Activated CD4-positive, alpha-beta T cell treated with anti-CD3 and anti-CD28 coated beads, Interleukin-2, amount 10 ng/mL, durations not matched to agents 7 days and 5 days (primary cell): ENCODE measurements at regions of chr2 and their contacts with region 1.

Region 1: DNA sequence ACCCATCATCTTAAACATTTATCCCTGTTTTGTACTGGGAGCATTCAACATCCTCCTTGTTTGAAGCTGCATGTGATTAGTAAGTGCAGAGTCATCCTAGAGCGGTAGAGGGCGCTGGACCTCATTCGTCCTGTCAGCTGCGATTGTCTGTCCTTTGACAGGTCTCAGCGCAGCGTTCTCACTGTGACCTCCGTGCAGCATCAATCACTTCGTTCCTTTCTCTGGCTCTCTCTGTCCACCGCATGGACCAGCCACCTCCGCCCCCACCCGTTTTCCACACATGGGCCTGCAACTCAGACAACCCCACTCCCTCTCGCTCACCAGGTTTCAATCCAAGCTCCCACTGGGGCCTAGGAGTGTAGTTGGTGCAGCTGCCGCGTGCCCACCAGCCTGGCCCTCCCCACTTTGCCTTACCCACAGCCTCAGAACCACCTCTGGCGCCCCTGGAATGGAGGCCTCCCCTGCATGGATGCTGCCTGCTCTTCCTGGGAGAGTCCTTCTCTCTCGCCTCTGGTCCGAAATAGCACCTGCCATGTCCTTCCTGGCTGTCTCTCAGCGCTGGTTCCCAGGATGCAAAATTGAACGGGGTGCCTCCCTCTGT is 90.5 kb downstream of the NDUFA10 start:
- DNase-seq: peak; percentile 78
- H3K4me3 Mint-ChIP-seq: no peak overlapping the region
- H3K27ac Mint-ChIP-seq: peak overlapping the region; percentile 77
- H3K4me1 Mint-ChIP-seq: peaks cover 9% of the 10 kb centered on the region
- H3K27me3 Mint-ChIP-seq: no peaks in the 10 kb centered on the region

Region 2: GRCh38 chr2:239833269-239834109 is 101.2 kb before region 1 on chr2:
- CTCF ChIA-PET with region 1: no interaction called
- POLR2A ChIA-PET with region 1: no interaction called
- DNase-seq: no peak
- H3K4me3 Mint-ChIP-seq: no peak overlapping the region
- H3K27ac Mint-ChIP-seq: no peak overlapping the region
- H3K4me1 Mint-ChIP-seq: no peaks in the 10 kb centered on the region
- H3K27me3 Mint-ChIP-seq: peaks cover 2% of the 10 kb centered on the region

Region 3: DNA sequence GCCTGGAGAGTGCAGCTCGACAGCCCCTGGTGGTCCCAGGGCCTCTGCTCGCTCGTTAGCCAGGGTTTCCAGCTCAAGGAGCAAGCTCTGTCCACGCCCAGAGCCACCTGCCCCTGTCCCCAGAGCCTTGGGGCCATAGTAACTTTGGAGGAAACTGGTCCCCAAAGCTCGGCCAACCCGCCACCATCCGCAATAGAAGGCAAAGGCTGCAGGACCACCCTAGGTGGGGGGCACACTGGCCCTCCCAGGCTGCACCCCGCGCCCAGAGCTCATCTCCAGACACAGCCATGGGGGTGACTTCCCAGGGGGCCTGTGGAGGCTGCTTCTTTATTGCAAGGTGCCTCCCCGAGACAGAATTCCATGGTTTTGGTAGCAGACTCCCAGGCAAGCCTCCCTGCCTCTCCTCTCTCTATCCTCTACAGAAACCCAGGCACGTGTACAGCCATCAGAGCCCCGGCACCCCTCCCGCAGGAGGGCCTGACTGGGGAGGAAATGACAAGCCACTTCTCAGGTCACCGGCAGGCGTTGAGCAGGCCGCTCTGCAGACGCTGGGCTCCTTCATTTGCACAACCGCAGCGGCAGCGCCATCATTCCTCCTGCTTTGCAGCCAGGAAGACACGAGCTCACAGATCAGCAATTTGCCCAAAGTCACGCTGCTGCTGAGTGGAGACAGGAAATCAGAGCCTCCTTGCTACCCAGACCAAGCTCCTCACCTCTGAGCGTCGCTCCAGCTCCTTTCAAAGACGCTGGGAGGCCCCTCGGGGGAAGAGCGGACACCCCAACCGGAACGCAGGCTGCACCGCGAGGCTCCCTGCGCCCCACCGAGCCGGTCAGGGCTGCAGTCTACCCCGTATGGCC is 10.3 kb after region 1 on chr2:
- CTCF ChIA-PET with region 1: interaction called, 21 read pairs
- POLR2A ChIA-PET with region 1: no interaction called
- DNase-seq: peak; percentile 61
- H3K4me3 Mint-ChIP-seq: peak overlapping the region; percentile 5
- H3K27ac Mint-ChIP-seq: peak overlapping the region; percentile 84
- H3K4me1 Mint-ChIP-seq: peaks cover 12% of the 10 kb centered on the region
- H3K27me3 Mint-ChIP-seq: no peaks in the 10 kb centered on the region